A549 (cell line): ENCODE measurements at regions of chr14 and their contacts with region 1.

Region 1: DNA sequence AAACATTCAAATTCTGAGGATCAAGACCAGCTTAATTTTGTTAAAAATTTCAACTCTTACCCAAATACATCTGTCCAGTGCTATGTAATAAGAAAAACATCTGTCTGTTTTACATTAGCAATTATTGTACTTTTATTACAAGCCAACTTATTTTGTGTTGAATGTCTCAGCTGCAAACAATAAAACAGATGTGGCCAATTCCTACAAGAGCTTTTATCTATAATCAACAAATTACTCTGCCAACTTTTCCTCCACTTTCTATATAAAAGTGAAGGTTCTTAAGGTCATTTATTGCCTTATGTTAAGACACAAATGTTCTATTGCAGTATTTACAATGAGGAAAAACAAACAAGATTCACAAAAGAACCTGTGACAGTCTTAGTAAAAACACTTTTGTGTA is 72.7 kb downstream of the NOVA1 start:
- DNase-seq: no peak
- ATAC-seq: no peak
- H3K4me3 ChIP-seq: no peak overlapping the region
- H3K27ac ChIP-seq: no peak overlapping the region
- H3K4me1 ChIP-seq: peaks cover 4% of the 10 kb centered on the region; the same call in 1 of the 3 replicates
- CTCF ChIP-seq: no peak
- EP300 ChIP-seq: no peak
- POLR2A ChIP-seq: no peak
- RAD21 ChIP-seq: no peak

Region 2: GRCh38 chr14:26538176-26538575 is 13.1 kb after region 1 on chr14:
- CTCF ChIA-PET with region 1: no interaction called
- POLR2A ChIA-PET with region 1: no interaction called
- DNase-seq: no peak
- ATAC-seq: no peak
- H3K4me3 ChIP-seq: no peak overlapping the region
- H3K27ac ChIP-seq: no peak overlapping the region
- H3K4me1 ChIP-seq: no peaks in the 10 kb centered on the region
- CTCF ChIP-seq: no peak
- EP300 ChIP-seq: no peak
- POLR2A ChIP-seq: no peak
- RAD21 ChIP-seq: no peak

Region 3: GRCh38 chr14:26598081-26598795 is 73.2 kb after region 1 on chr14:
- CTCF ChIA-PET with region 1: no interaction called
- POLR2A ChIA-PET with region 1: interaction called, 14 read pairs
- DNase-seq: peak; percentile 57 to 93
- ATAC-seq: peak; percentile 89 to 92
- H3K4me3 ChIP-seq: peak overlapping the region; percentile 60
- H3K27ac ChIP-seq: peak overlapping the region; percentile 89 to 95
- H3K4me1 ChIP-seq: peaks cover 12% of the 10 kb centered on the region; the same call in 2 of the 3 replicates
- CTCF ChIP-seq: no peak
- EP300 ChIP-seq: no peak
- POLR2A ChIP-seq: no peak; the same call in 1 of the 2 replicates
- RAD21 ChIP-seq: no peak